ENCODE measurements at regions of chr2 and their contacts with region 1.

Region 1: GRCh38 chr2:29014811-29015421 is 33.8 kb downstream of the TOGARAM2 start:
- DNase-seq: peak; percentile 46 to 93 (median 82)
- ATAC-seq: peak; percentile 57
- H3K4me3 ChIP-seq: peak overlapping the region; percentile 27 to 37
- H3K4me3 Mint-ChIP-seq: peak overlapping the region; percentile 75
- H3K27ac ChIP-seq: peak overlapping the region; percentile 85 to 98
- H3K27ac Mint-ChIP-seq: peak overlapping the region; percentile 99
- H3K4me1 ChIP-seq: peaks cover 72% of the 10 kb centered on the region
- H3K4me1 Mint-ChIP-seq: peaks cover 76% of the 10 kb centered on the region
- H3K27me3 ChIP-seq: no peaks in the 10 kb centered on the region
- H3K27me3 Mint-ChIP-seq: no peaks in the 10 kb centered on the region
- CTCF ChIP-seq: peak; percentile 63

Region 2: GRCh38 chr2:28751252-28751955 is 263.5 kb before region 1 on chr2 and contains the start of gene PPP1CB:
- CTCF ChIA-PET with region 1: no interaction called
- POLR2A ChIA-PET with region 1: no interaction called
- intact Hi-C with region 1: loop called in 1 of 2 experiments (anchors 5 kb)
- DNase-seq: peak; percentile 93 to 100 (median 95)
- ATAC-seq: peak; percentile 85
- H3K4me3 ChIP-seq: peak within 1 kb of the TSS; percentile 63 to 88
- H3K4me3 Mint-ChIP-seq: peak within 1 kb of the TSS; percentile 93
- H3K27ac ChIP-seq: peak within 1 kb of the TSS; percentile 86 to 97
- H3K27ac Mint-ChIP-seq: peak within 1 kb of the TSS; percentile 96
- H3K4me1 ChIP-seq: peaks cover 46% of the 10 kb centered on the region
- H3K4me1 Mint-ChIP-seq: peaks cover 65% of the 10 kb centered on the region
- H3K27me3 ChIP-seq: no peaks in the 10 kb centered on the region
- H3K27me3 Mint-ChIP-seq: no peaks in the 10 kb centered on the region
- CTCF ChIP-seq: no peak
- total RNA-seq, gene PPP1CB: 331 to 334 TPM

Region 3: GRCh38 chr2:28870146-28870891 is 144.6 kb before region 1 on chr2 and contains the start of gene TRMT61B:
- CTCF ChIA-PET with region 1: no interaction called
- POLR2A ChIA-PET with region 1: interaction called, 5 read pairs
- intact Hi-C with region 1: loop called in 1 of 2 experiments (anchors 2 kb)
- DNase-seq: peak; percentile 89 to 99 (median 97)
- ATAC-seq: peak; percentile 96
- H3K4me3 ChIP-seq: peak within 1 kb of the TSS; percentile 89 to 98
- H3K4me3 Mint-ChIP-seq: peak within 1 kb of the TSS; percentile 94
- H3K27ac ChIP-seq: peak within 1 kb of the TSS; percentile 94 to 95
- H3K27ac Mint-ChIP-seq: peak within 1 kb of the TSS; percentile 99
- H3K4me1 ChIP-seq: peaks cover 28% of the 10 kb centered on the region
- H3K4me1 Mint-ChIP-seq: peaks cover 33% of the 10 kb centered on the region
- H3K27me3 ChIP-seq: no peaks in the 10 kb centered on the region
- H3K27me3 Mint-ChIP-seq: no peaks in the 10 kb centered on the region
- CTCF ChIP-seq: no peak
- total RNA-seq, gene TRMT61B: 17.9 to 22.9 TPM

Region 4: GRCh38 chr2:28958689-28959088 is 56.2 kb before region 1 on chr2:
- CTCF ChIA-PET with region 1: interaction called, 21 read pairs
- POLR2A ChIA-PET with region 1: interaction called, 6 read pairs
- intact Hi-C with region 1: loop called (anchors 1 kb)
- DNase-seq: peak in 8 of 9 experiments; percentile 15 to 78 (median 37)
- ATAC-seq: peak; percentile 56
- H3K4me3 ChIP-seq: no peak overlapping the region
- H3K4me3 Mint-ChIP-seq: no peak overlapping the region
- H3K27ac ChIP-seq: no peak overlapping the region
- H3K27ac Mint-ChIP-seq: no peak overlapping the region
- H3K4me1 ChIP-seq: no peaks in the 10 kb centered on the region
- H3K4me1 Mint-ChIP-seq: peaks cover 8% of the 10 kb centered on the region
- H3K27me3 ChIP-seq: no peaks in the 10 kb centered on the region
- H3K27me3 Mint-ChIP-seq: no peaks in the 10 kb centered on the region
- CTCF ChIP-seq: peak; percentile 75

Region 5: DNA sequence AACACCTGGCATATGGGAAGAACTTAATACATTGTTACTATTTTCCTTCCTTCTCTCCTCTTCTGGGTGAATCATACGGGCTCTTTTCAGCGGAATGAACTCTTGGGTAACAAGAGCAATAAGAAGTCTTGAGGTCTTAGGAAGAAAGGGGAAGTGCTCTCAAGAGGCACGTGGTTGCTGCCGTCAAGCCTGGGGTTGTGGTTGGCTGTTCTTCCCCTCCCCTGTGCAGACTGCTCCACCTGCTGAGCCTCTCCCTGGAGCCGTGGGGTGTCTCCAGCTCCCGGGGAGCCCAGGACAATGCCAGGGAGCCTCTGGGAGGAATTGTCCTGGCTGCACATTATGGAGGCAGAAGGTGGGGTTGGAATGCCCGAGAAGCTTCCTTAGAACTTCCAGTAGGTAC is 14.4 kb before region 1 on chr2:
- CTCF ChIA-PET with region 1: interaction called, 12 read pairs
- POLR2A ChIA-PET with region 1: interaction called, 65 read pairs
- intact Hi-C with region 1: loop called in 1 of 2 experiments (anchors 1 kb)
- DNase-seq: peak in 8 of 9 experiments; percentile 34 to 88 (median 64)
- ATAC-seq: peak; percentile 94
- H3K4me3 ChIP-seq: no peak overlapping the region
- H3K4me3 Mint-ChIP-seq: peak overlapping the region; percentile 8
- H3K27ac ChIP-seq: peak overlapping the region in 1 of 2 experiments; percentile 79
- H3K27ac Mint-ChIP-seq: peak overlapping the region; percentile 92
- H3K4me1 ChIP-seq: peaks cover 28% of the 10 kb centered on the region
- H3K4me1 Mint-ChIP-seq: peaks cover 31% of the 10 kb centered on the region
- H3K27me3 ChIP-seq: no peaks in the 10 kb centered on the region
- H3K27me3 Mint-ChIP-seq: no peaks in the 10 kb centered on the region
- CTCF ChIP-seq: no peak

Region 6: DNA sequence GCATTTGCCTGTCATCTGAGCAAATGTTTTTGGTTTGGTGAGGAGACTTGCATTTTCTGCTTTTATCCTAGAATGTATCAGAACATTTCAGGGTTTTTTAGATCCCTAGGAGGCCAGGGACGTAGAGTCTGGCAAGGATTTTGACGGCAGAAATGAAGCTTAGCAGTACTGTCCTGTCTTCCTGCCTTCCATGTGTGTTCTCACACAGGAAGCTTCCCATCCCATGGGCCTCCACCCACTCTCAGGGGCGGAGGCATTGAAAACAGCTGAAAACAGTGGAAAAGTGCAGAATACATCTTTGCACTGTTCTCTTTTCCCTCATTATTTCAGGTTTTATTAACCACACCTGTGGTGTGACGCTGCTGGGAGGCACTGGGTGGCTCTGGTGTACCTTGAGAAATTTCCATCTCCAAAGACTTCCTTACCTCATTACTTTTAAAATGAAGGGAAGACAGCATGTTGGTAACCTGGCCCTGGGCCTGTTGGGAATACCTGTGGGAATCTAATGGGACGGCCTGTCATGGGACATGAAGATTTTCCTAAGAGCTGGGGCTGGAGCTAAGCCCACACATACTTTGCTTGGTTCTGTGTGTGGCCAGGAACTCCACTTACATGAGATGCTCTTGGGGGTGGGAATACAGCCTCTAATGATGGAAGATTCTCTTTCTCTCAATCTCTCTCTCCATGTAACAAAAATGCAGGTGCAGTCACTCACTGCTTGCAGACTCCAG is 38.9 kb after region 1 on chr2:
- CTCF ChIA-PET with region 1: no interaction called
- POLR2A ChIA-PET with region 1: no interaction called
- intact Hi-C with region 1: no loop called
- DNase-seq: no peak
- ATAC-seq: no peak
- H3K4me3 ChIP-seq: no peak overlapping the region
- H3K4me3 Mint-ChIP-seq: no peak overlapping the region
- H3K27ac ChIP-seq: no peak overlapping the region
- H3K27ac Mint-ChIP-seq: no peak overlapping the region
- H3K4me1 ChIP-seq: no peaks in the 10 kb centered on the region
- H3K4me1 Mint-ChIP-seq: no peaks in the 10 kb centered on the region
- H3K27me3 ChIP-seq: no peaks in the 10 kb centered on the region
- H3K27me3 Mint-ChIP-seq: peaks cover 2% of the 10 kb centered on the region
- CTCF ChIP-seq: no peak

Region 7: DNA sequence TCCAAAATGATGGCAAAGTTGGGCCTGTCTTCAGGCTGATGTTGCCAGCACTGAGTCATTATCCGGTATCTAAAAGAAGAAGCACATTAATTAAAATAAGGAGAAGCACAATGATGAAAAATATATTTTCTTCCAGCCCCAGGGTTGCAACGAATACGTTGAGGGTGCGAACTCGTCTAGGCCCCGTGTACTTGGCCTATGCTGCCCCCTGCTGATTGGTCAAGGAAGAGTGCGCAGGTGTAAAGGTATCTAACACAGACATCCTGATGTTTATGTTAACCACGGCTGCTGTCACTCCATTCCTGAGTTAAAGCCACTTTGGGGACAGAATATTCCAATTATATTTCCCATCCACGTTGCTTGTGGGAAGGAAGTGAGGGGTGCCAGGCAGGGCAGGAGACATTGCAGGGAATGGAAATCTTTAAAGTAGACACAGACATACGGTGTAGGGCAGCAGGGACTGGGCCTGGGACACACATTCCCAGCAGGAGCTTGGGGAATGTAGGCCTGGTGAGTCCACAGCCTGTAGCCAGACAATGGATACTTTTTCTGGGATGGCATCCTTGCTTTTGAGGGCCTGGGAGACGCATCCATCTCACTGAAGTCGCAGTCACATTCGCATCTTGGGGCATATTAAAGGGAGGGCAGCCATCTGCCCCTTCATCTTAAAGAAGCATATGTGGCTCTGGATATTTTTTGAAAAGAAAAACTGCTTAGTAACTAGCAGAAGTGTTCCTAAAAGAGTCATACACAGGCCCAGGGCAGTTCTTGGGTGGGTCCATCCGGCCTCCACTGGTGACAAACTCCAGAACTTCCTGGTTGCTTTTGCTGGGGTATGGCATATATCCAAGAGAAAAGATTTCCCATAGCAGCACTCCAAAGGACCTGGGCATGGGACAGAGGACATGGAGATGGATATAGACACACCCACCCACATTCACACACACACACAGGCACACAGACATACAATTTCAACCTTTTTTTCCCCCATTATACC is 182.2 kb after region 1 on chr2:
- CTCF ChIA-PET with region 1: interaction called, 5 read pairs
- POLR2A ChIA-PET with region 1: no interaction called
- intact Hi-C with region 1: loop called (anchors 2 to 5 kb)
- DNase-seq: peak; percentile 59 to 83 (median 79)
- ATAC-seq: peak; percentile 98
- H3K4me3 ChIP-seq: no peak overlapping the region
- H3K4me3 Mint-ChIP-seq: no peak overlapping the region
- H3K27ac ChIP-seq: no peak overlapping the region
- H3K27ac Mint-ChIP-seq: no peak overlapping the region
- H3K4me1 ChIP-seq: no peaks in the 10 kb centered on the region
- H3K4me1 Mint-ChIP-seq: peaks cover 7% of the 10 kb centered on the region
- H3K27me3 ChIP-seq: no peaks in the 10 kb centered on the region
- H3K27me3 Mint-ChIP-seq: no peaks in the 10 kb centered on the region
- CTCF ChIP-seq: peak; percentile 87

Measured in CD8-positive, alpha-beta T cell (primary cell).